H1 (cell line): ENCODE measurements at regions of chr4 and their contacts with region 1.

Region 1: GRCh38 chr4:89625599-89626298 is 211.2 kb downstream of the SNCA start:
- DNase-seq: no peak
- H3K4me3 ChIP-seq: no peak overlapping the region
- H3K27ac ChIP-seq: no peak overlapping the region
- H3K4me1 ChIP-seq: no peaks in the 10 kb centered on the region
- H3K27me3 ChIP-seq: no peaks in the 10 kb centered on the region
- CTCF ChIP-seq: no peak
- EP300 ChIP-seq: no peak
- POLR2A ChIP-seq: no peak
- RAD21 ChIP-seq: no peak

Region 2: GRCh38 chr4:89586864-89587263 is 38.9 kb before region 1 on chr4:
- CTCF ChIA-PET with region 1: no interaction called
- POLR2A ChIA-PET with region 1: no interaction called
- DNase-seq: no peak
- H3K4me3 ChIP-seq: no peak overlapping the region
- H3K27ac ChIP-seq: no peak overlapping the region
- H3K4me1 ChIP-seq: peaks cover 0 to 2% (median 0%) of the 10 kb centered on the region in 4 experiments; a peak in 1 of 7 replicates
- H3K27me3 ChIP-seq: peaks cover 6 to 29% (median 16%) of the 10 kb centered on the region in 4 experiments
- CTCF ChIP-seq: peak in 1 of 3 experiments; percentile 14; a peak in 2 of 4 replicates
- EP300 ChIP-seq: no peak
- POLR2A ChIP-seq: no peak
- RAD21 ChIP-seq: peak; percentile 34 to 39

Region 3: DNA sequence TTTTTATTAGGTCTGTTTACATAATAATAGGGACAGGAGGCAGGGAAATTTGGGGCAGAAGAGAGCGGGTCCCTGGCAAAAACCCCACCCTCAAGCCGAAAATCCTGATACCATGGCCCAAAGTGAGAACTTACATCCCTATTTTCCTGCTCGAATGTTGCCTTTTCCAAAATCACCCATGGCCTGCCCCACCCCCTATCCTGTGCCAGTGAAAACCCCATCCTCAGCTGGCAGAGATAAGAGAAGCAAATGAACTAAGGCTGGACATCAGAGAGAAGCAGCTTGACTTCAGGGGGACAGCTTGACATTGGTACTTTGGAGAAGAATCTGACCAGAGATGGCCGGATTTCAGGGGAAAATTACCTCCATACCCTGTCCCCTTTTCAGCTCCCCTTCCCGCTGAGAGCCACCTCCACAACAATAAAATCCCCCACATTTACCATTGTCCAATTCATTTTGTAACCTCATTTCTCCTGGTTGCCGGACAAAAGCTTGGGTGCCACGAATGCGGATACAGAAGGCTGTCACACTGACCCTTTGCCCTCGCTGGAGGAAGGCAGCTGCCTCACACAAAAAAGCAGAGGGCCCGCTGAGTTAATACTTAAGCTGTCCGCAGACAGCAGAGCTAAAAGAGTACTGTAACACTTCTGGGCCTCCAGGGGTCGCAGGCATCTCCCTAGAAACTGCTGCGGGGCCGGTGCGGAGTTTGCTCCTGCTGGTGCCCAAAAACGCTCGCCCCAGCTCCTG is 15.0 kb after region 1 on chr4:
- CTCF ChIA-PET with region 1: interaction called, 12 read pairs
- POLR2A ChIA-PET with region 1: no interaction called
- DNase-seq: peak; percentile 80 to 91
- H3K4me3 ChIP-seq: no peak overlapping the region; a peak in 1 of 8 replicates
- H3K27ac ChIP-seq: no peak overlapping the region
- H3K4me1 ChIP-seq: peaks cover 0 to 3% (median 0%) of the 10 kb centered on the region in 4 experiments; a peak in 2 of 7 replicates
- H3K27me3 ChIP-seq: no peaks in the 10 kb centered on the region
- CTCF ChIP-seq: peak; percentile 60 to 85 (median 84)
- EP300 ChIP-seq: no peak
- POLR2A ChIP-seq: no peak
- RAD21 ChIP-seq: peak; percentile 73 to 81